ENCODE measurements at regions of chr4 and their contacts with region 1.

Region 1: GRCh38 chr4:25367004-25367621 is 9.9 kb upstream of the ANAPC4 start:
- DNase-seq: no peak
- H3K4me3 Mint-ChIP-seq: no peak overlapping the region
- H3K27ac Mint-ChIP-seq: no peak overlapping the region
- H3K4me1 Mint-ChIP-seq: no peaks in the 10 kb centered on the region
- H3K27me3 Mint-ChIP-seq: no peaks in the 10 kb centered on the region

Region 2: GRCh38 chr4:24980064-24980690 is 386.9 kb before region 1 on chr4:
- intact Hi-C with region 1: loop called (anchors 1 kb)
- DNase-seq: peak; percentile 32
- H3K4me3 Mint-ChIP-seq: no peak overlapping the region
- H3K27ac Mint-ChIP-seq: no peak overlapping the region
- H3K4me1 Mint-ChIP-seq: peaks cover 15% of the 10 kb centered on the region
- H3K27me3 Mint-ChIP-seq: peaks cover 10% of the 10 kb centered on the region

Region 3: DNA sequence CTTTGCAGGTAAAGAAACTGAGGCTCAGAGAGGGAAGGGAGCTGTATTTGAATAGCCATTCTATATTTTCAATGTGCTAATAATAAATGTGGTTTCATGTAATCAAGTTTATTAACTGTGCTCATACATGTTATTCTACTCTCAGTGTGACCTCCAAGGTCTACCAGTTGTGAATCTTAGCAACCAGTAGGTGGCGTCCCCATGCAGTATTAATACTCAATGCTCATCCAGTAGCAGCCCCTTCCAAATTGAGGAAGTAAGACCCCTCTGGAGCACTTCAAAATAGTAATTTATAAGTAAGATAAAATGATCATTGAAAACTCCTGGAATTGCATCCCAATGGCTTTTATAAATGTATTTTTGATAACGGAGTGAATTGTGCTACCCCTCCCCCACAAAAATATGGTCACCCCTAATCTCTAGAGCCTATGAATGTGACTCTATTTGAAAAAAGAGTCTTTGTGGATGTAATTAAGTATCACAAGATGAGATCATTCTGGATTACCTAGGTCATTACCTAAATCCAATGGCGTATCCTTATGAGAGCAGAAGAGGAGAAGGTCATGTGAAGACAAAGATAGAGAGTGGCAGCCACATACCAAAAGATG is 186.5 kb before region 1 on chr4:
- intact Hi-C with region 1: loop called (anchors 1 kb)
- DNase-seq: no peak
- H3K4me3 Mint-ChIP-seq: no peak overlapping the region
- H3K27ac Mint-ChIP-seq: no peak overlapping the region
- H3K4me1 Mint-ChIP-seq: peaks cover 12% of the 10 kb centered on the region
- H3K27me3 Mint-ChIP-seq: no peaks in the 10 kb centered on the region

Measured in activated T-helper 2 cell treated with anti-CD3 and anti-CD28 coated beads, Interferon-gamma antibody, Interleukin-2, Interleukin-4, amounts not matched to agents 10 μg/mL and 5 μg/mL and 100 μg/mL, durations not matched to agents 14 hours and 24 hours and 36 hours (primary cell).